ENCODE measurements at regions of chr3 and their contacts with region 1.

Region 1: DNA sequence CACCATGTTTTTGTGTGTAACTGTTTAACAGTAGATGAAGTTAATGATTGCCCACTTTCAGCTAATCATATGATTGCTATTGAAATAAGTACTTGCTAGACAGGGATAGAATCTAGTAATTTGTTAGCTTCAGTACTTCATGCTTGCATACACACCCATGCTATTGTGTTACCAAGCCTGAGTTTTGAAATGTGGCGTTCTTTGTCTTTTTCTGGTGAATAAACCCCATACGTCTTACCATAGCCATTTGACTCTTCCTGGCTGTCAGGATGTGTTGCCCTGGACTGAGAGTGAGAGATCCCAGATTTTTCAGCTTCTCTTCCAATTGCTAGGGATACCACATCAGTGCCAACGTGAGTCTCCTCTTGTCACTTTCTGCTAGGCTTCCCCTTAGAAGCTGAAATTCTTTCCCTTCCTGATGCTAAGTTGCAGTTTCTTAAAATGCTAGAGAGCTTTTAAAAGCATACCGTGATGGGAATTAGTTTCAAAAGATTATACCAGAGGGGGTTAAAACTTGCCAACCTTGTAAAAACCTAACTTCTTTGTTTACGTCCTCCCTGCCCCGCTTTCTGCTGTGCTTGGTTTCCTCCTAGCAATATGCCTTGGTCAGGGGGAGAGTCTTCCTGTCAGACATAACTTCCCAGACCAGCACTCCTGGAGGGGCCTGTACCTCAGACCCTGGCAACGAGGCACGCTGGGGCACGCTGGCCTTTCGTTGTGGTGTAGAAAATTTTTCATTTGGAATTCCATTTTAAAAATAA is 62.9 kb upstream of the ULK4 start:
- DNase-seq: no peak
- H3K4me3 ChIP-seq: peak overlapping the region in 2 of 8 donors; percentile 0 to 2
- H3K27ac ChIP-seq: peak overlapping the region; percentile 5 to 85 (median 77)
- H3K4me1 ChIP-seq: peaks cover 33 to 92% (median 69%) of the 10 kb centered on the region in 6 donors
- H3K27me3 ChIP-seq: no peaks in the 10 kb centered on the region
- CTCF ChIP-seq: no peak
- POLR2A ChIP-seq: no peak

Region 2: GRCh38 chr3:42067326-42067725 is 42.6 kb after region 1 on chr3:
- intact Hi-C with region 1: loop called (anchors 5 kb)
- DNase-seq: no peak
- H3K4me3 ChIP-seq: peak overlapping the region in 1 of 8 donors; percentile 17
- H3K27ac ChIP-seq: peak overlapping the region; percentile 71 to 88 (median 82)
- H3K4me1 ChIP-seq: peaks cover 45 to 100% (median 82%) of the 10 kb centered on the region in 6 donors
- H3K27me3 ChIP-seq: no peaks in the 10 kb centered on the region
- CTCF ChIP-seq: no peak
- POLR2A ChIP-seq: no peak

Region 3: DNA sequence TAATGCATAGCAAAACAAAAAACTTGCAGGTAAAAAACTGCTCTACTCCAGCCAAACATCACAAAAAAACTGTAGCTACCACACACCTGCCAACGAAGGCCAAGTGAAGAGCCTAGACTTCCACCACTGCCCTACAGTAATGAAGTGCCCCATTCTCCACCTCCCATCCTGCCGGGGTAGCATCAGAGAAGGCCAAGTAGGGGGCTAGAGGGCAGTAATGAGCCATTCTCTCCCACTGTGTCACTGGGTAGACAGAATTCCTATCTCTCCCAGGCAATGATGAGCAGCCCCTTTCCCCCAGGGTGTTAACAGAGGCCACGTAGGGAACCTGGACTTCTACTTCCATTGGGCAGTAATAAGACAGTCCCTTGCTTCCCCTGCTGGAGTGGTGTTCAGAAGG is 547.5 kb after region 1 on chr3:
- intact Hi-C with region 1: no loop called
- DNase-seq: no peak
- H3K4me3 ChIP-seq: no peak overlapping the region
- H3K27ac ChIP-seq: no peak overlapping the region
- H3K4me1 ChIP-seq: peaks cover 0 to 3% (median 0%) of the 10 kb centered on the region in 6 donors
- H3K27me3 ChIP-seq: no peaks in the 10 kb centered on the region
- CTCF ChIP-seq: peak in 5 of 11 experiments; percentile 24 to 52 (median 36)
- POLR2A ChIP-seq: no peak